BJ (cell line): ENCODE measurements at regions of chr1 and their contacts with region 1.

Region 1: DNA sequence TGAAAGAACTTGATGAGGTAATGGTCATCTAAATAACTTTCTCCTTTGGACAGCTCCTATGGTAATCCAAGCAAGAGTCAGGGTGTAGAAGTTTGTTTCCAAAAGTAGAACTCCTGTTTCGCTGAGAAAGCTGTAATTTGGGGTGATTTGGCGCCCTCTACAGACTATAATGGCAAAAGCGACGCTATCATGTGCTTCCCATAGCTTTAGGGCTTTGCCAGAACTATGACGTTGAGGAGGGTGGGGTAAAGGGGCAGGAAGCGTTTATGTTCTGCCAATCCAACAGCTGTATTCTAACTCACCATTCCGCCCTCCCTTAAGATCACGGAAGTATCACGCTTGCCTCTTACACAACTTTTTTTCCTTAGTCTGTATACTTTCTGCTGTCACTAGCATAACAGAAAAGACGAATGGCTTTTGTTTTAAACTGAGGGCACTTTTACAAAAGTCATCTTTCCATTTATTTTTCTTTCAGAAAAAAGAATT is at the start of gene FMO4:
- DNase-seq: peak; percentile 99
- H3K4me3 ChIP-seq: peak within 1 kb of the TSS; percentile 25
- H3K27me3 ChIP-seq: no peaks in the 10 kb centered on the region
- CTCF ChIP-seq: peak; percentile 79
- polyA plus RNA-seq, gene FMO4: 4.2 and 7.5 TPM in 2 replicates

Region 2: GRCh38 chr1:170967042-170967910 is 346.6 kb before region 1 on chr1:
- CTCF ChIA-PET with region 1: interaction called, 22 read pairs
- POLR2A ChIA-PET with region 1: no interaction called
- DNase-seq: peak; percentile 19
- H3K4me3 ChIP-seq: no peak overlapping the region
- H3K27me3 ChIP-seq: no peaks in the 10 kb centered on the region
- CTCF ChIP-seq: peak; percentile 72

Region 3: DNA sequence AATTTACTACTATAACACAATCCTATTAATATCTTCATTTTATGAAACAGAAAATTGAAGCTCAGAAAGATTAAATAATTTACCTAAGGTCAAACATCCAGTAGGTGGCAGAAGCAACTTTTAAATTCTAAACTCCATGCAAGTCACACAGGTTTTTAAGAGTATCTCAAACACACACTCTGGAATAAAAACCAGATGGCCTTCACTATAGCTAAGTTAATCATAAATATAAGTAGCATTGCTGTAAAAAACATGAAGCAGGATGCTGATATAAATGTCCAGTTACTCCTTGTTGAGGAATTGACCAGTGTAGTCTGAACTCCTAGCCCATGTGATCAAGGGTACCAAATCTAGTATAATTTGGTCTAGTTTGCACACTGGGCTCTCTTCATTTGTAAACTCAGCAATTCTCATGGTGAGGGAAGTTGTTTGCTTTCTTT is 232.5 kb before region 1 on chr1:
- CTCF ChIA-PET with region 1: interaction called, 38 read pairs
- POLR2A ChIA-PET with region 1: no interaction called
- DNase-seq: peak; percentile 46
- H3K4me3 ChIP-seq: no peak overlapping the region
- H3K27me3 ChIP-seq: no peaks in the 10 kb centered on the region
- CTCF ChIP-seq: peak; percentile 42

Region 4: GRCh38 chr1:171173069-171173468 is 140.8 kb before region 1 on chr1:
- CTCF ChIA-PET with region 1: interaction called, 16 read pairs
- POLR2A ChIA-PET with region 1: no interaction called
- DNase-seq: no peak
- H3K4me3 ChIP-seq: no peak overlapping the region
- H3K27me3 ChIP-seq: no peaks in the 10 kb centered on the region
- CTCF ChIP-seq: no peak

Region 5: GRCh38 chr1:171245458-171246064 is 68.3 kb before region 1 on chr1:
- CTCF ChIA-PET with region 1: interaction called, 84 read pairs
- POLR2A ChIA-PET with region 1: no interaction called
- DNase-seq: no peak
- H3K4me3 ChIP-seq: no peak overlapping the region
- H3K27me3 ChIP-seq: no peaks in the 10 kb centered on the region; the same call in 1 of the 2 replicates
- CTCF ChIP-seq: peak; percentile 84

Region 6: GRCh38 chr1:171457412-171457811 is 143.5 kb after region 1 on chr1:
- CTCF ChIA-PET with region 1: no interaction called
- POLR2A ChIA-PET with region 1: no interaction called
- DNase-seq: no peak
- H3K4me3 ChIP-seq: no peak overlapping the region
- H3K27me3 ChIP-seq: no peaks in the 10 kb centered on the region
- CTCF ChIP-seq: no peak